ENCODE measurements at regions of chr4 and their contacts with region 1.

Region 1: GRCh38 chr4:141133146-141133998 is at the start of gene RNF150:
- DNase-seq: peak in 1 of 2 experiments; percentile 52
- H3K4me3 ChIP-seq: peak within 1 kb of the TSS; percentile 44; the same call in 1 of the 2 replicates
- H3K27ac ChIP-seq: no peak within 1 kb of the TSS
- H3K4me1 ChIP-seq: no peaks in the 10 kb centered on the region
- H3K27me3 ChIP-seq: no peaks in the 10 kb centered on the region
- CTCF ChIP-seq: peak; percentile 63
- total RNA-seq, gene RNF150: 0.15 and 0.75 TPM in 2 replicates

Region 2: GRCh38 chr4:139817657-139818452 is 1315.5 kb before region 1 on chr4:
- CTCF ChIA-PET with region 1: no interaction called
- POLR2A ChIA-PET with region 1: no interaction called
- intact Hi-C with region 1: no loop called
- DNase-seq: no peak
- H3K4me3 ChIP-seq: no peak overlapping the region
- H3K27ac ChIP-seq: no peak overlapping the region
- H3K4me1 ChIP-seq: no peaks in the 10 kb centered on the region
- H3K27me3 ChIP-seq: no peaks in the 10 kb centered on the region
- CTCF ChIP-seq: no peak

Region 3: GRCh38 chr4:140595065-140595464 is 538.3 kb before region 1 on chr4:
- CTCF ChIA-PET with region 1: no interaction called
- POLR2A ChIA-PET with region 1: no interaction called
- intact Hi-C with region 1: loop called (anchors 10 kb)
- DNase-seq: peak; percentile 40 to 46
- H3K4me3 ChIP-seq: no peak overlapping the region
- H3K27ac ChIP-seq: no peak overlapping the region
- H3K4me1 ChIP-seq: no peaks in the 10 kb centered on the region
- H3K27me3 ChIP-seq: no peaks in the 10 kb centered on the region
- CTCF ChIP-seq: peak; percentile 67

Region 4: DNA sequence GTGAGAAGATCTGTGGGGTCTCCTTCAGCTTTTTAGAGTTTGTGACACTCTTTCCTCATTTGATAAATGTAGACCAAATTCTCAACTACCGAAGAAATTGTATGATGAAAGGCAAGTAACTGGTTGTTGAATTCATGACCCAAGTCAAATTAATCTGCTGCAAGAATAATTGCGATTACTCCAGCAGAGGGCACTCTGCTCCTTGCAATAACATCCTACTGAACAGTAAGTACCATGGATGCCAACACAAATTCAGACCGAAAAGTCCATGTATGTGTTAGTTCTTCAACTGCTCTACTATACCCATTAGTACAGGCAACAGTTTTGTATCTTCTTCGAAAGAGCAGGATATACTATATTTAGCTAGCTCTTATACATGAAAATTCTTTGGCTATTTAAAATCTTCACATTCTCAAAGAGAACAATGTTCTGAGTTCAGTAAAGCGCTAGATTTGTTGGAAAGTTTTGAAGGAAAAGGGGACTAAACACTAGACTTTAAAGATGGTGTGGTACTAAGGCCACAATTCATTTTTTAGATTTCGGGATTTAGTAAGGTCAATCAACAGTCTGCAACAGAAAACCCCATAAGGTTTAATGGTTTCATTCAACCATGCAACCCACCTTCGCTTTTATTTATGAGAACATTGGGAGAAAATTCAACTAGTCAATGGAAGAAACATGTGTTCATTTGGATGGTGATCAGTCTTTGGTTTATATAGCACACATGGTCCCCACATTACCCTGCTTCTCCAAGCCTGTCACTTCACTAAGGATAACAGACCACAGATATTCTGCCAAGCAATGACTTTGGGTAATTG is 271.8 kb before region 1 on chr4:
- CTCF ChIA-PET with region 1: interaction called, 4 read pairs
- POLR2A ChIA-PET with region 1: no interaction called
- intact Hi-C with region 1: loop called (anchors 1 kb)
- DNase-seq: peak; percentile 48 to 51
- H3K4me3 ChIP-seq: no peak overlapping the region
- H3K27ac ChIP-seq: no peak overlapping the region
- H3K4me1 ChIP-seq: peaks cover 13% of the 10 kb centered on the region
- H3K27me3 ChIP-seq: no peaks in the 10 kb centered on the region
- CTCF ChIP-seq: peak; percentile 79

Region 5: DNA sequence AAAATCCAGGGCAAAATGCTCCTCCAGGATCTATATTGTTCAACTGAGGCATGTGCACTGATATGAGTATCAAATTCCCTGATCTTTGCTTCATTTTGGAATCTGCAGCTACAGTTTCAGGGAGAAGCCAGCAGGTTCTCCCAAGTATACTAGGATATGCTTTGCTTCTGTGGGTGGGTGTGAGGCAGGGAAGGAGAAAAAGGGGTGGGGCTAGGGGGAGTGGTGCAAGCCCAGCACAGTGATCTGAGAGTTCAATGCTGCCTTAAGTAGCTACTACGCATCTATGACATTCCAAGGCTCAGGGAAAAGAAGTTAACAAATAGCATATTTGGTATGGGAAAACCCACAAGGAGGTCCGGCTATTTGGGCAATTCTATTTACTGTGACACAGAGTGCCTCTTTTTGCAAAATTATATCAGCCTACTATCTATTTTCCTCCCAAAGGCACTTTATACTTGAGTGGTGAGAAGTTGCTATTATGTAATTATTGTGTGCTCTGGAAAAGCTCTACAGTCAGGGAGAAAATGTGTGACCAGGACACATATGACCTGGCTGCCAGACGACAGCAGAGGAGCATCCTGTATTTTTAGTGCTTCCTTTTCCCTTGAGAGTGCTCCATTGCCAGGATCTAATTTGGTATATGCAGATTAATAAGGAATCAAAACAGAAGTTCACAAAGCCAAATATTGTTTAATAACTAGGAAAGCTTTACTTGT is 162.1 kb before region 1 on chr4:
- CTCF ChIA-PET with region 1: interaction called, 13 read pairs
- POLR2A ChIA-PET with region 1: no interaction called
- intact Hi-C with region 1: no loop called
- DNase-seq: no peak
- H3K4me3 ChIP-seq: no peak overlapping the region
- H3K27ac ChIP-seq: no peak overlapping the region
- H3K4me1 ChIP-seq: no peaks in the 10 kb centered on the region
- H3K27me3 ChIP-seq: no peaks in the 10 kb centered on the region
- CTCF ChIP-seq: no peak